ENCODE measurements at regions of chr14 and their contacts with region 1.

Region 1: GRCh38 chr14:75399821-75400678 is 27.8 kb upstream of the JDP2 start:
- DNase-seq: no peak
- ATAC-seq: no peak
- H3K4me3 ChIP-seq: no peak overlapping the region
- H3K4me3 Mint-ChIP-seq: no peak overlapping the region
- H3K27ac ChIP-seq: no peak overlapping the region
- H3K27ac Mint-ChIP-seq: no peak overlapping the region
- H3K4me1 ChIP-seq: peaks cover 0 to 4% of the 10 kb centered on the region in 2 experiments
- H3K4me1 Mint-ChIP-seq: peaks cover 3 to 10% (median 8%) of the 10 kb centered on the region in 3 donors
- H3K27me3 ChIP-seq: peaks cover 0 to 8% of the 10 kb centered on the region in 2 experiments
- H3K27me3 Mint-ChIP-seq: peaks cover 0 to 4% of the 10 kb centered on the region in 2 donors

Region 2: GRCh38 chr14:74459289-74459946 is 940.6 kb before region 1 on chr14:
- CTCF ChIA-PET with region 1: no interaction called
- POLR2A ChIA-PET with region 1: interaction called in 1 of 2 experiments, 11 read pairs
- DNase-seq: peak in 10 of 35 experiments; percentile 1 to 17 (median 10)
- ATAC-seq: peak in 2 of 4 experiments; percentile 35 to 41
- H3K4me3 ChIP-seq: no peak overlapping the region
- H3K4me3 Mint-ChIP-seq: no peak overlapping the region
- H3K27ac ChIP-seq: no peak overlapping the region
- H3K27ac Mint-ChIP-seq: no peak overlapping the region
- H3K4me1 ChIP-seq: no peaks in the 10 kb centered on the region
- H3K4me1 Mint-ChIP-seq: no peaks in the 10 kb centered on the region
- H3K27me3 ChIP-seq: peaks cover 0 to 35% of the 10 kb centered on the region in 2 experiments
- H3K27me3 Mint-ChIP-seq: peaks cover 14 to 21% of the 10 kb centered on the region in 2 donors

Region 3: DNA sequence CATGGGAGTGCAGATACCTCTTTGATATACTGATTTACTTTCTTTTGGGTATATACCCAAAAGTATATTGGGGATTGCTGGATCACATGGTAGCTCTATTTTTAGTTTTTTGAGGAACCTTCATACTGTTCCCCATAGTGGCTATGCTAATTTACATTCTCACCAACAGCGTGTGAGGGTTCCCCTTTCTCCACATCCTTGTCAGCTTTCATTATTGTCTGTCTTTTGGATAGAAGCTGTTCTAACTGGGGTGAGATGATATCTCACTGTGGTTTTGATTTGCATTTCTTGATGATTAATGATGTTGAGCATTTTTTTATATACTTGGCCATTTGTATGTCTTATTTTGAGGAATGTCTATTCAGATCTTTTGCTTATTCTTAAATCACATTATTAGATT is 16.3 kb before region 1 on chr14:
- CTCF ChIA-PET with region 1: no interaction called
- POLR2A ChIA-PET with region 1: no interaction called
- DNase-seq: no peak
- ATAC-seq: no peak
- H3K4me3 ChIP-seq: no peak overlapping the region
- H3K4me3 Mint-ChIP-seq: no peak overlapping the region
- H3K27ac ChIP-seq: no peak overlapping the region
- H3K27ac Mint-ChIP-seq: no peak overlapping the region
- H3K4me1 ChIP-seq: no peaks in the 10 kb centered on the region
- H3K4me1 Mint-ChIP-seq: no peaks in the 10 kb centered on the region
- H3K27me3 ChIP-seq: no peaks in the 10 kb centered on the region
- H3K27me3 Mint-ChIP-seq: peaks cover 17 to 34% of the 10 kb centered on the region in 2 donors

Region 4: GRCh38 chr14:76293923-76294322 is 893.9 kb after region 1 on chr14:
- CTCF ChIA-PET with region 1: no interaction called
- POLR2A ChIA-PET with region 1: no interaction called
- DNase-seq: no peak
- ATAC-seq: no peak
- H3K4me3 ChIP-seq: no peak overlapping the region
- H3K4me3 Mint-ChIP-seq: no peak overlapping the region
- H3K27ac ChIP-seq: no peak overlapping the region
- H3K27ac Mint-ChIP-seq: no peak overlapping the region
- H3K4me1 ChIP-seq: no peaks in the 10 kb centered on the region
- H3K4me1 Mint-ChIP-seq: no peaks in the 10 kb centered on the region
- H3K27me3 ChIP-seq: no peaks in the 10 kb centered on the region
- H3K27me3 Mint-ChIP-seq: peaks cover 15 to 17% of the 10 kb centered on the region in 2 donors

Measured in T-cell (primary cell).